ENCODE measurements at regions of chr1 and their contacts with region 1.

Region 1: GRCh38 chr1:111197598-111198284 is 2.7 kb downstream of the DENND2D start:
- DNase-seq: no peak
- H3K4me3 Mint-ChIP-seq: peak overlapping the region; percentile 100
- H3K27ac Mint-ChIP-seq: peak overlapping the region; percentile 98
- H3K4me1 Mint-ChIP-seq: peaks cover 73% of the 10 kb centered on the region
- H3K27me3 Mint-ChIP-seq: no peaks in the 10 kb centered on the region

Region 2: GRCh38 chr1:111032295-111032897 is 165.3 kb before region 1 on chr1:
- CTCF ChIA-PET with region 1: no interaction called
- POLR2A ChIA-PET with region 1: no interaction called
- DNase-seq: peak; percentile 63
- H3K4me3 Mint-ChIP-seq: no peak overlapping the region
- H3K27ac Mint-ChIP-seq: no peak overlapping the region
- H3K4me1 Mint-ChIP-seq: peaks cover 1% of the 10 kb centered on the region
- H3K27me3 Mint-ChIP-seq: peaks cover 23% of the 10 kb centered on the region

Region 3: DNA sequence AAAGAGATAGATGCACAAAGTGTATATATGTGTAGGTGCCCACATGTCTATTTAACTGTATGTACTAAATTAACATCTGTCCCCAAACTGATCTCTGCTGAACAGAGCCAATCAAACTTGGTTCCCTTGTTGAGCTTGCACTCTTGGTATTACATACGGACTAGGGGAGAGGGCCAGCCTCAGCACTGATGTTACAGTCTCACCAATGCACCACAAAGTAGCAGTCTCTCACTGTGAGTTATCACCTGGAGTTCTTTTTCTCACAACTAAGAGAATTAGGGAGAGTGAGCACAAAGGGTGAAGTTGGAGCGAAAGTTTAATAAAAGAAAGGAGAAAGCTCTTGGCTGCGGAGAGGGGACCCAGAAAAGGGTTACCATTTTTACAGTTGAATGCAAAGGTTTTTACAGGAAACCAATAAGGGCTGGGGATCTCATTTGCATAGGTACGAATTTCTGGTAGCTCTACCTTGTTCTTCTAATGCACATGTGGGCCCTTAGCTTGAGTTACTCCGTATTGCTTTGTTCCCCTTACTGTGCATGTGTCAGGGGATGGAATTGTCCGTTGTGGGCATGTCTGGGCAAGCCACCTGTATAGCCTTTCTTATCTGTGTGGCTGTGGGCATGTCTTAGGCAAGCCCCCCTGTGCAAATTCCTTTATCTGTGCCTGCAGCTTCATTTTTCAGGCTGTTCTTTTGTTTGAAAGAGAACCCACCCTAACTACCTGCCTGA is 16.5 kb after region 1 on chr1:
- CTCF ChIA-PET with region 1: interaction called, 30 read pairs
- POLR2A ChIA-PET with region 1: interaction called, 32 read pairs
- DNase-seq: no peak
- H3K4me3 Mint-ChIP-seq: peak overlapping the region; percentile 60
- H3K27ac Mint-ChIP-seq: peak overlapping the region; percentile 93
- H3K4me1 Mint-ChIP-seq: peaks cover 87% of the 10 kb centered on the region
- H3K27me3 Mint-ChIP-seq: no peaks in the 10 kb centered on the region

Region 4: DNA sequence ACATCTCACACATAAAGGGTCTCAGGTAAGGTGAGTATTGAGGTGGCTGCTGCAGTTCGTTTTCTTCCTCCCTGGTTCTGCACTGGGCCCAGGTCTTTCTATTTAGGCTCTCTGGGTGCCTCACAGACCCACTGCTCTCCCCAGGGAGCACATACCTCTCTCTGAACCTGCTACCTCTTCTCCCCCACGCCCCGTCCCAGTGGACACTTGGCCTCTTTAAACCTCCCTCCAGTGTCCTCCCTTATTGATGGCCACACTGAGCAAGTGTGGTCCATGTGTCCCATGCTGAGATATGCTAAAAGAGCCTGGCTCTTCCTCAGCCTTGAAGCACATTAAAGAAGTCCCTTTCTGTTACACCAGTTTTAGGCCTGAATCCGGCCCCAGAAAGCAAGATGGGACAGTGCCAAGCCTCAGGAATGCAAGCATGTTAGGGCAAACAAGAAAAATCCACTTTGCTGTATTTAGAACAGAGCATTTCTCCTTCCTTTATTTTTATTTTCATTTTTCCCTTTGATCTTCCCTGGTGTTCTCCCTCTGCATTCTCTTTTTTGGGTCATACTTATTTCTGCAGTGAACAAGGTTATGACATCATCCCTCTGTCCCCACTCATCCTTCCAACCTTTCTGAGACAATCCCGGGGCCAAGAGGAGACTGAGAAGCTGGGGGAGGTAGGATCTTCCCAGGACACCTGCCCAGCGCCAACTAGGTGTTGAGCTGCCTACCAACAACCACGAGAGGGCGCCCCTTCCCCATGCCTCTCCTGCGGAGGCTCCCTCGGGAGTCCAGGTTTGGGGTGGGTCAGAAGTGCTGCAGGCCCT is 24.8 kb after region 1 on chr1:
- CTCF ChIA-PET with region 1: interaction called, 30 read pairs
- POLR2A ChIA-PET with region 1: interaction called, 26 read pairs
- DNase-seq: peak; percentile 84
- H3K4me3 Mint-ChIP-seq: peak overlapping the region; percentile 68
- H3K27ac Mint-ChIP-seq: peak overlapping the region; percentile 93
- H3K4me1 Mint-ChIP-seq: peaks cover 92% of the 10 kb centered on the region
- H3K27me3 Mint-ChIP-seq: no peaks in the 10 kb centered on the region

Measured in activated CD4-positive, alpha-beta T cell treated with anti-CD3 and anti-CD28 coated beads, Interleukin-2, amount 10 ng/mL, durations not matched to agents 7 days and 5 days (primary cell).